MCF 10A (cell line): ENCODE measurements at regions of chr20 and their contacts with region 1.

Region 1: DNA sequence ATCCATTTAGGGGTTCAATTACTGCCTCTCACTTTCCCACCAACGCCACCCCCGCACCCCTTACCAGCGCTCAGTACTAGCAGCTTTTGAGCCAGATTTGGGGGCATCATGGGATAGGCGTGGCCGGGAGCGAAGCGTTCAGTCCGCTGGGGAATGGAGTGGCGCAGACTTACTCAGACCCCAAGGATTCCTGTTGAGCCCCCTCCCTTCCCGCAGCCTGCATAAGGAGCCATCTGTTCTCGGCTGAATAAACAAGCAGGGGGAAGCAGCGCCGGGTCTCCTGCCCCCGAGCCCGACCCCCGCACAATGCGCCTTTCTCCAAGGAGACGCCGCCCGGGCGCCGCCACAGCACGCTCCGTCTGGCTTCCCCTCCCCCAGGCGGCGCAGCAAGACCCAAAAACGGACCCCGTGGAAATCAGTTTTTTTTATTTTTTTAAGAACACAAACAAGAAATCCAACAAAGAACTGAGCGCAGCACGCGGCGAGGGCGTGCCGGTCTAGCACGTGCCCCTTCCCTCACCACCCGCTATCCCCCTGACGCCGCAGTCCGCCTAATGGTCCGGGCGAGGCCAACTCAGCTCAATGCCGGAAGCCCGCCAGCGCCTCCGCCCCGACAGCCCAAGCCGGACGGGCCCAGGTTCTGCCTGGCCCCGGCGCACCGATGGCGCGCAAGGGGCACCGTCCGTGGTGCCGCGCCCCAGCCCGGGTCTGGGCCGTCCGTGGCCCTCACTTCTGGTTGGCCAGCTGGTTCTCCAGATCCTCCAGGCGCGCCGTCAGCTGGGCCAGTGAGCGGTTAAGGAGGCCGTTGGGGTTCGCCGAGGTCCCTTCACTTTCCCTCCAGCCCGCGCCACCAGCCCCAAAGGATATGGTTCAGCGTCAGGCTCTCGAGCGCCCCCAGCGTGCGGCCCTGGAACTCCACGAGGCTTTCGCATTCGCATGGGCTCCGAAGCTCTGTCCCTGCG is 13.3 kb upstream of the RBPJL start:
- DNase-seq: peak; percentile 79
- H3K4me3 Mint-ChIP-seq: peak overlapping the region; percentile 64
- H3K27ac Mint-ChIP-seq: no peak overlapping the region
- H3K4me1 Mint-ChIP-seq: peaks cover 12% of the 10 kb centered on the region
- H3K27me3 Mint-ChIP-seq: no peaks in the 10 kb centered on the region
- CTCF ChIP-seq: peak; percentile 97

Region 2: DNA sequence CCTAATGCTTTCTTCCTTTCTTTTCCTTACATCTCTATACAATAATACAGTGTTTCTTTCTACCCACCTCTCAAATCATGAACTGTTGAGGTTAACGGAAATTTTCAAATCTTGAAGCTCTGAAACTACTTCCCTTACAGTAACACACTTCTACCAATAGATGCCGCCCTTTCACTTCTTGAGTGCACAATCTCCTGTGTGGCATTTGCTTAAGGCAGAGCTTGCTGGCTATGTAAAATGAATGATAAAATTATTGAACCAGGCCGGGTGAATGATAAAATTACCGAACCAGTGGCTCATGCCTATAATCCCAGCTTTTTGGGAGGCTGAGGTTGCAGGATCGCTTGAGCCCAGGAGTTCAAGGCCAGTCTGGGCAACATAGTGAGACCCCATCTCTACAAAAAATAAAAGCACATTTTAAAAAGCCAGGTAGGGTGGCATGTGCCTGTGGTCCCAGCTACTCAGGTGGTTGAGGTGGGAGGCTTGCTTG is 249.2 kb before region 1 on chr20:
- CTCF ChIA-PET with region 1: interaction called, 149 read pairs
- POLR2A ChIA-PET with region 1: interaction called, 17 read pairs
- intact Hi-C with region 1: loop called (anchors 1 kb)
- DNase-seq: peak; percentile 88
- H3K4me3 Mint-ChIP-seq: no peak overlapping the region
- H3K27ac Mint-ChIP-seq: peak overlapping the region; percentile 73
- H3K4me1 Mint-ChIP-seq: peaks cover 33% of the 10 kb centered on the region
- H3K27me3 Mint-ChIP-seq: no peaks in the 10 kb centered on the region
- CTCF ChIP-seq: peak; percentile 90

Region 3: DNA sequence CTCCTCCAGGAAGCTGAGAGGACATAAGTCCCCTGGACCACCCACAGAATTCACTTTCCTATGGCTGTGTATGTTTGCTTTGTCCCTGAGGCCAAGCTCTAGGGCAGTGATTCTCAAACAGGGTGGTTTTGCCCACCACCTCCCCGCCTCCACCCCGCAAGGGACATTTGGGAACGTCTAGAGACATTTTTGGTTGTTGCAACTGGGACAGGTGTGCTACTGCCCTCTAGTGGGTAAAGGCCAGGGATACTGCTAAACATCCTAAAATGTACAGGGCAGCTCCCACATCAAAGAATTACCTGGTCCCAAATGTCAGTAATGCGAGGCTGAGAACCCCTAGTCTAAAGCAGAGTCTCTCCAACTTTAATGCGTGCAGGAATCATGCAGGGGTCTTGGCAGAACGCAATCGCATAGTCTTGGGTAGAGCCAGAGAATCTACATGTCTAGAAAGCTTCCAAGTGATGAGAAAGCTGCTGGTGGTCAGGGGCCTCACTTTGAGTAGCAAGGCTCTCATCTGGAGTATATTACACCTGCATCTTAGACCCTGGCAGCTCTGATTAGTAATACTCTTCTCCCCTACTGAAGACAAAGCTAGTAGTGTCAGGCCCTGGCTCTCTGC is 197.5 kb before region 1 on chr20:
- CTCF ChIA-PET with region 1: interaction called, 167 read pairs
- POLR2A ChIA-PET with region 1: interaction called, 5 read pairs
- intact Hi-C with region 1: loop called (anchors 2 kb)
- DNase-seq: peak; percentile 76
- H3K4me3 Mint-ChIP-seq: no peak overlapping the region
- H3K27ac Mint-ChIP-seq: no peak overlapping the region
- H3K4me1 Mint-ChIP-seq: no peaks in the 10 kb centered on the region
- H3K27me3 Mint-ChIP-seq: no peaks in the 10 kb centered on the region
- CTCF ChIP-seq: peak; percentile 72

Region 4: DNA sequence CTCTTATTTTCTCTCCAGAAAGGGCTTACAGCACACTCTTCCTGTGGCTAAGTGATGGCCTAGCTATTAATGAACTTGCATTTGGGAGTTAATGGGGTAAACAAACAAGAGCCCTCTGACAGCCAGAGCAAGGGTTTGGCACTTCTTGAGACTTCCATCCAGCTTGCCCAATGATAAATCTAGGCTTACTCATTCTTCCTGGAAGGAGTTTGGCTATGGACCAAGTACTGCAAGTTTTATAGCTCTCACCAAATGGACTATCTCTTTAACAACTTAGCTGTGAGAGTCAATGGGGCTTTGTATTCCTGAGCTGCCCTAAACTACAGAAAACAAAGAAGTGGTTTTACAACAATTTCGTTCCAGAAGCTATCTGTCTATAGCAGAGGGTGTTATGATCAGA is 135.4 kb before region 1 on chr20:
- CTCF ChIA-PET with region 1: interaction called, 22 read pairs
- POLR2A ChIA-PET with region 1: interaction called, 4 read pairs
- intact Hi-C with region 1: no loop called
- DNase-seq: peak; percentile 95
- H3K4me3 Mint-ChIP-seq: no peak overlapping the region
- H3K27ac Mint-ChIP-seq: peak overlapping the region; percentile 47
- H3K4me1 Mint-ChIP-seq: peaks cover 11% of the 10 kb centered on the region
- H3K27me3 Mint-ChIP-seq: no peaks in the 10 kb centered on the region
- CTCF ChIP-seq: no peak

Region 5: GRCh38 chr20:45206746-45207145 is 86.6 kb before region 1 on chr20 and contains the start of gene SEMG1:
- CTCF ChIA-PET with region 1: interaction called, 10 read pairs
- POLR2A ChIA-PET with region 1: no interaction called
- intact Hi-C with region 1: no loop called
- DNase-seq: no peak
- H3K4me3 Mint-ChIP-seq: no peak within 1 kb of the TSS
- H3K27ac Mint-ChIP-seq: no peak within 1 kb of the TSS
- H3K4me1 Mint-ChIP-seq: no peaks in the 10 kb centered on the region
- H3K27me3 Mint-ChIP-seq: peaks cover 83% of the 10 kb centered on the region
- CTCF ChIP-seq: no peak
- total RNA-seq, gene SEMG1: not detected in 2 replicates

Region 6: DNA sequence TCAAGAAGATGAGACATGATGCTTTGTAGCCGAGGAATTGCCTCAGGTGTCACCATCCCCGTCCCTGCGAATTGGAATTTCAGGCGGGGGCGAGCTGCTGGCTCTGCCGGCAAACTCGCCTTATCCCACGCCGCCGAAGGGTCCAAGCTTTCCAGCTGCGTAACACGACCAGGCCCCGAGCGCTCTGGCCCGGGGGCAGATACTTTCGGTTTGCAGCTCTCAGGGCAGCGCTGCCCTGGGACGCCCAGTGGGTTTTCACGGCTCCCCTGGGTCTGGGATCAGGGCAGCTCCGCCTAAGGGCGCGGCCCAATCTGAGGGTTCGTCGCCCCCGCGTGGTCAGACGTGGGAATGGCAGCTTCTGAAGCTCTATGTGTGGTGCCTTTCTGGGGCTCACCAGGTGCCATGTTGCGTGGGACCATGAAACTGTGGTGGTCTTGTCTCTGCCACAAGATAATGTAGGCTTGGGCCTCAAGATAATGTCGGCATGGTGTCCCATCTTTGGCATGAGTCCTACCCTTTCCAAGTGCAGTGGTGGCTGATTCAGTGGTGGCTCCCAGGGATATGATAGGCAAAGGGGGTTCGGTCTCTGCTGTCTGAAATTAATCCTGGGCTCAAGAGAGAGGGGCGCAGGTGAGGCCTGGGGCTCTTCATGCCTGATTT is 143.5 kb after region 1 on chr20:
- CTCF ChIA-PET with region 1: interaction called, 25 read pairs
- POLR2A ChIA-PET with region 1: interaction called, 4 read pairs
- intact Hi-C with region 1: no loop called
- DNase-seq: peak; percentile 82
- H3K4me3 Mint-ChIP-seq: peak overlapping the region; percentile 74
- H3K27ac Mint-ChIP-seq: peak overlapping the region; percentile 57
- H3K4me1 Mint-ChIP-seq: no peaks in the 10 kb centered on the region
- H3K27me3 Mint-ChIP-seq: no peaks in the 10 kb centered on the region
- CTCF ChIP-seq: peak; percentile 95

Region 7: DNA sequence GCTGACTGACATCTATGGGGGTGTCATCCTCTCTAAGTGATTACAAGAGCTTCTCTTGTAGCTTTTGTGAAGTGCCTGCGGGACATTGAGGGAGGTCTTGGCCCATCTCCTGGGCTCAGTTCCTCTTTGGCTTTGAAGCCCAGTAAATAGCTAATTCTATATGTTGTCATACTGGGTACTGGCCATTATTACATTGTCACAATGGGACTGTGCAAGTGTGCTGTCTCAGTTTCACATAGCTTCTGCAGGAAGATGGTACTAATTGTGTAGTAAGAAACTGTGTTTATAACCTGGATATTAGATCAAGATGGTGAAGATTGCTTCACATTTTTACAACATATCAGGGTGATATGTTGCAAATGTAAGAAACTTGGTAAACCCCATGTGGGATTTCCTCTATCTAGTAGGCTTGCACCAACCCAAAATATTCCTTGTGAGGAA is 202.2 kb after region 1 on chr20:
- CTCF ChIA-PET with region 1: no interaction called
- POLR2A ChIA-PET with region 1: no interaction called
- intact Hi-C with region 1: no loop called
- DNase-seq: no peak
- H3K4me3 Mint-ChIP-seq: no peak overlapping the region
- H3K27ac Mint-ChIP-seq: no peak overlapping the region
- H3K4me1 Mint-ChIP-seq: peaks cover 6% of the 10 kb centered on the region
- H3K27me3 Mint-ChIP-seq: peaks cover 33% of the 10 kb centered on the region
- CTCF ChIP-seq: no peak

Region 8: GRCh38 chr20:45993197-45993951 is 700.1 kb after region 1 on chr20:
- CTCF ChIA-PET with region 1: no interaction called
- POLR2A ChIA-PET with region 1: no interaction called
- intact Hi-C with region 1: no loop called
- DNase-seq: peak; percentile 97
- H3K4me3 Mint-ChIP-seq: peak overlapping the region; percentile 33
- H3K27ac Mint-ChIP-seq: peak overlapping the region; percentile 57
- H3K4me1 Mint-ChIP-seq: peaks cover 25% of the 10 kb centered on the region
- H3K27me3 Mint-ChIP-seq: no peaks in the 10 kb centered on the region
- CTCF ChIP-seq: no peak

Region 9: DNA sequence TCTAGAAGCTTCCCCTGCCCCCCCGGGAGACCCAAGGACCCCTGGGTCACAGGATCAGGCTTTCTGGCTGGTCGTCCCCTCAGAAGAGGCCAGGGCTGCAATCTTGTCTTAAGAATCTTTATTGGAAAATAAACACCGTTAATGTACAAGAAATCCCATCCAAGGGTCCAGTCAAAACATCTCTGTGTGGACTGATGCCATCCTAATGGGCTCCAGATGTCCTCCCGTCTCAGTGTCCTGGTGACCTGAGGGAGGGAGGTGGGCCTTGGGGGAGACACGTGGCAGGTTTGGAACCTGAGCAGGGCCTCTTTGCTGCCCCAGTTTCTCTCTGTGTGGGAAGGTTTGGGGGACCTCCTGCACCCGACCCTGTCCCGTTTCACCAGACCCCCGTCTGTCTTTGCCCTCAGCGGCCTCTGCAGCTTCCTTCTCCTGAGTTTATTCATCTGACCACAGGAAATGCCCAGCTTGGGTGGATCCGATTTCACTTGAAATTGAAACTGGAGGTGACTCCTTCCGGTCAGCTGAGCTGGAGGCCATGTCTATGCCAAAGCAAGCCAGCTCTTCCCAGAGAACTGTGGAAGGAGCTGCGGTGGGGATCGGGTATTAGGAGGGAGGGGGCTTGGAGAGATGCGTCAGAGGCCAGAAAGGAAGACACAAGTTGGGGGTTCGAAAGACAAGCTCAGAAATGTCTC is 1491.3 kb after region 1 on chr20:
- CTCF ChIA-PET with region 1: no interaction called
- POLR2A ChIA-PET with region 1: no interaction called
- intact Hi-C with region 1: no loop called
- DNase-seq: no peak
- H3K4me3 Mint-ChIP-seq: no peak overlapping the region
- H3K27ac Mint-ChIP-seq: no peak overlapping the region
- H3K4me1 Mint-ChIP-seq: no peaks in the 10 kb centered on the region
- H3K27me3 Mint-ChIP-seq: peaks cover 8% of the 10 kb centered on the region
- CTCF ChIP-seq: no peak